ENCODE measurements at regions of chr11 and their contacts with region 1.

Region 1: DNA sequence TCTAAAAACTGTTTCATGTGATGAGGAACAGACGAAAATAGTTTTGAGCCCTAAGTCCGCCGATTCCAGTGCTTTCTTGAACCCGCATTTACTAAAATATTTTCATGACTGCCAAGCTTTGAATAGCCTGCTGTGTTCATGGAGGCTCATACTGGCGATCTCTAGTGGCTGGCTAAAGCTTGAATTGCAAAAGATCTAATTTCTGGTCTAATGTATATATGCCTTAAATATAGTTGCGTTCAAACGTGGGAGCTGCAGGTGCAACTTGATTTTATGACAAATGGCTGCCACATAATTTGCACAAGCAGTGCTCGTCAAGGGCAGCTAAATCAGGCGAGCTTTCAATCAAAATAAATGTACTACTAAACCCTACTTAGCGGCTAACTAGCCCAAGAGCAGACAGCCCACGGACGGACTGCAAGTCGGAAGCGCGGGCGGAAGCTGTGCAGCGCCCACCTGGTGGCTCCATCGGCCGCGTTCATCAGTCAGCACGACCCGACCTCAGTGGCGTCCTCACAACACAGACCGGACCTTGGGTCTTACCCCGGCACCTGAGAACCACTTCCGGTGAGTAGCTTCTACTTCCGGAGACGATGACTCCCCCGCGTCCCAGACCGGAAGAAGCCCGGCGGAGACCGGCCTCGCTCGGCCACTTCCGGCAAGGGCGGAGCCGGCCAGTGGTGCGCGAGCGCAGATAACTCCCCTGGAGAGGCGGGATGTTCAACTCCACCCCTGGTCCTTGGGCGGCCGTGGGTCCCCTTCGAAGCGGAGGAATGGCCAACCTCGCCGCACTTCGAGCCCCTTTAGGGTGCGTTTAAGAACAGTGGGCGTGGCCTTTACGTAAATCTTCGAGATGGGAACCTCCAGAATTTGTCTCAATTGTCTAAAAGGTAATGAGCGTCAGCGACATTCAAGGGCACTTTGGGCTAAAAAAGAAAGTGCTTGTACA is 6.1 kb downstream of the RPL27A start:
- DNase-seq: peak; percentile 46 to 89 (median 77)
- ATAC-seq: peak; percentile 76
- H3K4me3 ChIP-seq: peak overlapping the region; percentile 73
- H3K4me3 Mint-ChIP-seq: peak overlapping the region; percentile 96
- H3K27ac ChIP-seq: peak overlapping the region; percentile 73 to 84
- H3K27ac Mint-ChIP-seq: peak overlapping the region; percentile 90
- H3K4me1 ChIP-seq: peaks cover 26% of the 10 kb centered on the region
- H3K4me1 Mint-ChIP-seq: peaks cover 43% of the 10 kb centered on the region
- H3K27me3 ChIP-seq: no peaks in the 10 kb centered on the region
- H3K27me3 Mint-ChIP-seq: no peaks in the 10 kb centered on the region
- CTCF ChIP-seq: no peak

Region 2: DNA sequence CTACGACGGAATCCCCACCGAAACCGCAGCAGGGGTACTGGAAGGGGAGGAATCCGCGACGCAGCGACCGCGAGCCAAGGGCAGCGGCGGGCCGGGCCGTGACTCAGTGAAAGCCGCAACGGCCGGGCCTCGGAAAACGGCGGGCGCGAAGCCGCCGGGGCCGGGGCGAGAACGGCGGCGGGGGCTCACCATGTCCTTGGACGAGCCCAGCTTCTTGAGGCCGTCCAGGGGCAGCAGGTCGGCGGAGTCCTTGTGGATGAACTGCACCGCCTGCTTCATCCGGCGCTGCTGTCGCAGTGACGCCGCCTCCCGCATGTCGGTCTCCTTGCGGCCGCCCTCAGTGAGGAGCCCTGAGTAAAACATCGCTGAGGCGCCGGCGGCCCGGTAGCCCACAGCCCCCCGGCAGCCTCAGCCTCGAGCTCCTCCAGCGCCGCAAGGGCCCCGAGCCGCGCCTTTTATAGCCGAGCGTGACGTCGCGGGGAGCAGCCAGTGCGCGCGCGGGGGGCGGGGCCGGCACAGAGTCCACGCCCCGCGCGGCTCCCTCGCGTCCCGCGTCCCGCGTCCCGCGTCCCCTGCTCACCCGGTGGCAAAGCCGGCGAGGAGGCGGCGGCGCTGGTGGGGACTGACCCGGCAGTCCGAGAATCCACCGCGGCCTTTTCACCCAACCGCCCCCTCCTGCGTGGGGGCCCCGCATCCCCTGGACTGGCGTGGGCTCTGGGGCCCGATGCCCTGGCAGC is 315.1 kb after region 1 on chr11 and contains the start of gene NRIP3:
- CTCF ChIA-PET with region 1: no interaction called
- POLR2A ChIA-PET with region 1: no interaction called
- intact Hi-C with region 1: loop called in 1 of 2 experiments (anchors 10 kb)
- DNase-seq: peak; percentile 66 to 93 (median 76)
- ATAC-seq: peak; percentile 90
- H3K4me3 ChIP-seq: peak within 1 kb of the TSS; percentile 53
- H3K4me3 Mint-ChIP-seq: peak within 1 kb of the TSS; percentile 87
- H3K27ac ChIP-seq: no peak within 1 kb of the TSS
- H3K27ac Mint-ChIP-seq: peak within 1 kb of the TSS; percentile 25
- H3K4me1 ChIP-seq: peaks cover 23% of the 10 kb centered on the region
- H3K4me1 Mint-ChIP-seq: peaks cover 22% of the 10 kb centered on the region
- H3K27me3 ChIP-seq: peaks cover 11 to 40% of the 10 kb centered on the region in 2 experiments
- H3K27me3 Mint-ChIP-seq: peaks cover 51% of the 10 kb centered on the region
- CTCF ChIP-seq: no peak
- total RNA-seq, gene NRIP3: 4.6 to 4.9 TPM

Region 3: GRCh38 chr11:9663699-9664275 is 975.1 kb after region 1 on chr11 and contains the start of gene SWAP70:
- CTCF ChIA-PET with region 1: no interaction called
- POLR2A ChIA-PET with region 1: no interaction called
- intact Hi-C with region 1: loop called in 1 of 2 experiments (anchors 10 kb)
- DNase-seq: peak; percentile 36 to 80 (median 68)
- ATAC-seq: peak; percentile 86
- H3K4me3 ChIP-seq: peak within 1 kb of the TSS; percentile 86
- H3K4me3 Mint-ChIP-seq: peak within 1 kb of the TSS; percentile 84
- H3K27ac ChIP-seq: no peak within 1 kb of the TSS
- H3K27ac Mint-ChIP-seq: peak within 1 kb of the TSS; percentile 4
- H3K4me1 ChIP-seq: peaks cover 19% of the 10 kb centered on the region
- H3K4me1 Mint-ChIP-seq: peaks cover 11% of the 10 kb centered on the region
- H3K27me3 ChIP-seq: peaks cover 6 to 11% of the 10 kb centered on the region in 2 experiments
- H3K27me3 Mint-ChIP-seq: peaks cover 30% of the 10 kb centered on the region
- CTCF ChIP-seq: no peak
- total RNA-seq, gene SWAP70: 4.0 to 4.1 TPM

Measured in CD4-positive, alpha-beta T cell (primary cell).